ENCODE measurements at regions of chr10 and their contacts with region 1.

Region 1: GRCh38 chr10:104337974-104338735 is at the start of gene ITPRIP:
- DNase-seq: peak; percentile 50 to 83 (median 65)
- ATAC-seq: peak; percentile 83 to 87 (median 85)
- H3K4me3 ChIP-seq: peak within 1 kb of the TSS; percentile 93 to 97
- H3K4me3 Mint-ChIP-seq: peak within 1 kb of the TSS; percentile 88 to 99 (median 90)
- H3K27ac ChIP-seq: peak within 1 kb of the TSS; percentile 88
- H3K27ac Mint-ChIP-seq: peak within 1 kb of the TSS; percentile 97 to 100
- H3K4me1 ChIP-seq: peaks cover 36 to 46% of the 10 kb centered on the region in 2 experiments
- H3K4me1 Mint-ChIP-seq: peaks cover 49 to 54% (median 50%) of the 10 kb centered on the region in 3 donors
- H3K27me3 ChIP-seq: no peaks in the 10 kb centered on the region
- H3K27me3 Mint-ChIP-seq: no peaks in the 10 kb centered on the region
- total RNA-seq, gene ITPRIP: 16.9 to 98.5 (median 25.0) TPM

Region 2: GRCh38 chr10:104274762-104275721 is 63.1 kb before region 1 on chr10:
- CTCF ChIA-PET with region 1: interaction called, 9 to 12 read pairs
- POLR2A ChIA-PET with region 1: interaction called in 1 of 2 experiments, 8 read pairs
- DNase-seq: peak in 25 of 35 experiments; percentile 14 to 67 (median 32)
- ATAC-seq: peak; percentile 77 to 90 (median 85)
- H3K4me3 ChIP-seq: peak overlapping the region in 1 of 2 donors; percentile 9
- H3K4me3 Mint-ChIP-seq: peak overlapping the region in 1 of 3 donors; percentile 37
- H3K27ac ChIP-seq: no peak overlapping the region
- H3K27ac Mint-ChIP-seq: no peak overlapping the region
- H3K4me1 ChIP-seq: peaks cover 0 to 9% of the 10 kb centered on the region in 2 experiments
- H3K4me1 Mint-ChIP-seq: peaks cover 4% of the 10 kb centered on the region in 3 donors
- H3K27me3 ChIP-seq: peaks cover 0 to 22% of the 10 kb centered on the region in 2 experiments
- H3K27me3 Mint-ChIP-seq: peaks cover 5 to 11% of the 10 kb centered on the region in 2 donors

Region 3: GRCh38 chr10:104308439-104308903 is 29.7 kb before region 1 on chr10:
- CTCF ChIA-PET with region 1: interaction called, 9 to 45 read pairs
- POLR2A ChIA-PET with region 1: interaction called, 5 to 6 read pairs
- DNase-seq: peak in 10 of 35 experiments; percentile 23 to 58 (median 36)
- ATAC-seq: peak; percentile 59 to 72 (median 67)
- H3K4me3 ChIP-seq: no peak overlapping the region
- H3K4me3 Mint-ChIP-seq: peak overlapping the region; percentile 52 to 65 (median 53)
- H3K27ac ChIP-seq: peak overlapping the region; percentile 21
- H3K27ac Mint-ChIP-seq: peak overlapping the region; percentile 75 to 83
- H3K4me1 ChIP-seq: peaks cover 61 to 72% of the 10 kb centered on the region in 2 experiments
- H3K4me1 Mint-ChIP-seq: peaks cover 81 to 84% (median 83%) of the 10 kb centered on the region in 3 donors
- H3K27me3 ChIP-seq: no peaks in the 10 kb centered on the region
- H3K27me3 Mint-ChIP-seq: no peaks in the 10 kb centered on the region

Region 4: GRCh38 chr10:104322416-104322782 is 15.8 kb before region 1 on chr10:
- CTCF ChIA-PET with region 1: interaction called, 3 to 12 read pairs
- POLR2A ChIA-PET with region 1: interaction called in 1 of 2 experiments, 6 read pairs
- DNase-seq: peak in 5 of 35 experiments; percentile 20 to 45 (median 27)
- ATAC-seq: peak; percentile 33 to 62 (median 60)
- H3K4me3 ChIP-seq: peak overlapping the region in 1 of 2 donors; percentile 27
- H3K4me3 Mint-ChIP-seq: peak overlapping the region; percentile 62 to 85 (median 65)
- H3K27ac ChIP-seq: peak overlapping the region; percentile 74
- H3K27ac Mint-ChIP-seq: peak overlapping the region; percentile 97 to 98
- H3K4me1 ChIP-seq: peaks cover 84 to 92% of the 10 kb centered on the region in 2 experiments
- H3K4me1 Mint-ChIP-seq: peaks cover 98 to 100% (median 100%) of the 10 kb centered on the region in 3 donors
- H3K27me3 ChIP-seq: no peaks in the 10 kb centered on the region
- H3K27me3 Mint-ChIP-seq: no peaks in the 10 kb centered on the region

Region 5: DNA sequence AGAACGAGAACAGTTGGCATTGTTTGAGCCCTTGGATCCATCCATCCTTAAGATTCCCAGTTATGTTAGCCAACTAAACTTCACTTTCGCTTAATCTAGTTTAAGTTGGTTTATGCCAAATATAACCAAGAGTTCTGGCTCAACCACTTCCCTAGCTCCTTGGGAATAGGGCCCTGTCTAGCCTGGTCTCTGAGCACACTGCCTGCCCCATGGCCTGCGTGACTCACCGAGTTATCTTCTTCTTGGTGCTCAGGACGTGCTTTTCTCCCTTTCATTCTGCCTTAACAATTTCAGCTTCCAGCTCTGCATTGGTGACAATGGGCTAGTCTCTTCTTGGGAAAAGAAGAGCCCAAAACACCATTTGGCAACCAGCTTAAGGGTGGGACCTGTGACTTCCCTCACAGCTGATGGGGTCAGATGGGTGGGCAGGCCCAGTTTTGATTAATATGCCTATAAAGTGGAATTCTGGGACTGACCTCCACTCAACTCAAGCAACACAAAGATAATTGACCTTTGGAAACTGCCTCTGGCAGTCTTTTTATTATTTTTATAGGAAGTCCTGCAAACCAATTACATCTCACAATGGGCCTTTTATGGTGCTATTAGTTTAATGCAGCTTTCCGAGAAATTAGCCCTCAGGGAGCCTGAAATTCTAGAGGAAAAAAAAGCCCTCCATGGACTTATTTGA is 141.9 kb after region 1 on chr10:
- CTCF ChIA-PET with region 1: no interaction called
- POLR2A ChIA-PET with region 1: no interaction called
- DNase-seq: no peak
- ATAC-seq: no peak
- H3K4me3 ChIP-seq: no peak overlapping the region
- H3K4me3 Mint-ChIP-seq: no peak overlapping the region
- H3K27ac ChIP-seq: no peak overlapping the region
- H3K27ac Mint-ChIP-seq: no peak overlapping the region
- H3K4me1 ChIP-seq: no peaks in the 10 kb centered on the region
- H3K4me1 Mint-ChIP-seq: peaks cover 0 to 2% (median 0%) of the 10 kb centered on the region in 3 donors
- H3K27me3 ChIP-seq: peaks cover 0 to 14% of the 10 kb centered on the region in 2 experiments
- H3K27me3 Mint-ChIP-seq: peaks cover 25 to 30% of the 10 kb centered on the region in 2 donors